ENCODE measurements at regions of chr22 and their contacts with region 1.

Region 1: GRCh38 chr22:39170825-39171622 is 18.5 kb upstream of the CBX7 start:
- DNase-seq: peak; percentile 64 to 92 (median 84)
- ATAC-seq: peak; percentile 66 to 68
- H3K4me3 Mint-ChIP-seq: peak overlapping the region; percentile 53 to 83 (median 76)
- H3K27ac Mint-ChIP-seq: peak overlapping the region; percentile 91 to 99 (median 96)
- H3K4me1 Mint-ChIP-seq: peaks cover 33 to 50% (median 47%) of the 10 kb centered on the region in 4 donors
- H3K27me3 Mint-ChIP-seq: no peaks in the 10 kb centered on the region

Region 2: DNA sequence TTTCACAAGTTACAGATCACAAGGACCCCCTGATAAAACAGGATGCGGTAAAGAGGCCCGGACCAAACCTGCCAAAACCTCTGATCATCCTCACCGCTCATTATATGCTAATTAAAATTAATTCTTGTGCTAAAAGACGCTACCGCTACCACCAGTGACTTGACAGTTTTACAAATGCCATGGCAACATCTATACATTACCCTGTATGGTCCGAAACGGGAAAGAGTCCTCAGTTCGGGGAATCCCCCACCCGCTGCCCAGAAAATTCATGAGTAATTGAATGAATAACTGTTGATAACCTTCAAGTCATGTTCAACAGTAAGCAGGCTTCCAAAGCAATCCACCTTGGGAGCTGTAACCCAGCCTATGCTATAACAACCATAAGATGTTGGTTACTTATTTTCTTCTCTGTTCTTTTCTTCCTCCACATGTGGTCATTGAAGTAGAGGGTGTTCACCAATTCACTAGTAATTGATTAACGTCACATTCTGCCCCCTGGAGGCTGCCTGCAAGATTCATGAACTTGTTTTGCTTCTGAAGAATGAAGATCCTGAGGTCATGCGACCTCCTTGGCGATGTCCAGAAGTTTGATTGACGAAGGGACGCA is 53.3 kb before region 1 on chr22:
- POLR2A ChIA-PET with region 1: no interaction called
- DNase-seq: peak; percentile 35 to 87 (median 62)
- ATAC-seq: peak; percentile 63 to 65
- H3K4me3 Mint-ChIP-seq: peak overlapping the region in 6 of 10 donors; percentile 0 to 63 (median 31)
- H3K27ac Mint-ChIP-seq: peak overlapping the region in 9 of 10 donors; percentile 3 to 93 (median 76)
- H3K4me1 Mint-ChIP-seq: peaks cover 8 to 47% (median 17%) of the 10 kb centered on the region in 4 donors
- H3K27me3 Mint-ChIP-seq: no peaks in the 10 kb centered on the region

Region 3: DNA sequence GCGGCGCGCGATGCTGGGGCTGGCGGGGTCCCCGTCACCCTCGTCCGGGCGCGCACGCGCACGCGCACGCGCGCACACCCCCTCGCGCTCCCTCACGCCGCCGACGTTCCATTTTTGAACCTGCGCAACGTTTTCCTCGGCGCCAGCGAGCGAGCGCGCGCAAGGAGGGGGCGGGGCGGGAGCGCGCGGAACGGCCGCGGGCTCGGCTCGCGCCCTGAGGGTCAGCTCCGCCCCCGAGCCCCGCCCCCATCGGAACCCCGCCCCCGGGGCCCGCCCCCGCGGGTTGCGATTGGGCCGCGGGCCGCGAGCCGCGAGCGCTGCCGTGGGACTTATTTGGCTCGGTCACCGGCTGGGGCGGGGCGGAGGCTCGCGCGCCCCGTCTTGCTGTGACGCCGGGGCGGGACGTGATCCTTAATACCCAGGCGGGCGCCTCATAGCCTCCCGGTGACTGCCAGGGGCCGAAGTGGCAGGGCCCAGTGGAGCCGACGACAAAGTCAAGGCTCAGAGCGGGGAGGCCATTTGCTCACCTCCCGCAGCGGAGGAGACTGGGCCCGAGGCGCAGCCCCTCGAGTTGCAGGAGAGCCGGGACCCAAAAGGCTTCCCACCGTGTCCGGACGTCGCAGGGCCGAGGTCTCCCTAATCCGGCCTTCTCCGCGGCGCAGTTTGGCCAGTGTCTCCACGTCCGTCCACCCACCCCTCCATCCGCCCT is 18.4 kb before region 1 on chr22 and contains the start of gene CBX7:
- POLR2A ChIA-PET with region 1: interaction called, 42 read pairs
- DNase-seq: peak; percentile 87 to 96 (median 94)
- ATAC-seq: peak; percentile 84 to 89
- H3K4me3 Mint-ChIP-seq: peak within 1 kb of the TSS; percentile 85 to 97 (median 90)
- H3K27ac Mint-ChIP-seq: peak within 1 kb of the TSS; percentile 90 to 98 (median 92)
- H3K4me1 Mint-ChIP-seq: peaks cover 23 to 43% (median 39%) of the 10 kb centered on the region in 4 donors
- H3K27me3 Mint-ChIP-seq: peaks cover 0 to 4% (median 2%) of the 10 kb centered on the region in 5 donors
- polyA plus RNA-seq, gene CBX7: 19.1 to 23.1 (median 19.5) TPM

Region 4: GRCh38 chr22:39306581-39307361 is 135.7 kb after region 1 on chr22:
- POLR2A ChIA-PET with region 1: interaction called, 62 read pairs
- DNase-seq: peak in 9 of 10 donors; percentile 31 to 78 (median 47)
- ATAC-seq: peak; percentile 62 to 72
- H3K4me3 Mint-ChIP-seq: no peak overlapping the region
- H3K27ac Mint-ChIP-seq: peak overlapping the region in 5 of 10 donors; percentile 23 to 57 (median 40)
- H3K4me1 Mint-ChIP-seq: peaks cover 8 to 18% (median 13%) of the 10 kb centered on the region in 4 donors
- H3K27me3 Mint-ChIP-seq: no peaks in the 10 kb centered on the region

Measured in naive thymus-derived CD8-positive, alpha-beta T cell (primary cell).